Dorsolateral prefrontal cortex (tissue), 120 donors: ENCODE measurements at regions of chr7 and their contacts with region 1.

Region 1: DNA sequence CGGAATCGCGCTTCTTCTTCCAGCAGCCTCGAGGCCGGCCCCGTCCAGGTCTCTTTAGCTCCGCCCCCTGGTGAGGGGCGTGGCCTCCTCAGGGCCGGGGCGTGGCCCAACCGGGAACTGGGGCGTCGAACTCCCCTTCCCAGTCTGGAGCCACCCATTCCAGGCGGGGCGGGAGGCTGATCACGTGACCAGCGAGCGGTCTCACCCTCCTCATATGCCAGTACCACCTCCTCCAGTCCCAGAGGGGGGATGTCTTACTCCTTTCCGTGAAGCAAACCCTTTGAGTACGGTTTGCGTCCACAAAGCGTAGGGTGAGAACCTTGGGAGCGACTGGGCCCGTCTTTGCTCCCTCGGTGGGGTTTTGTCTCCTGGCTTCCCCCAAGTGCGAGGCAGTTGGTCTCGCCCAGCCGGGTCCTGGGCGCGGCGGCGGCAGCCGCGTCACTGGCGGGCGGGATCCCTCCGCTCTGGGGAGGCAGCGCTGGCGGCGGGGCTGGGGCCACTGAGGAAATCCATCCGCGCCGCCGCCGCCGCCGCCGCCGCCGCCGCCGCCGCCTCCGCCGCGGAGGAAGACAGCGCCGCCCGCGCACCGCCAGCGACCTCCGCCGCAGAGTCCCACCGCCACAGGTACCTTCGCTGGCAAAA is at the start of gene GNB2:
- DNase-seq: peak; percentile 98 to 100 (median 99)
- H3K4me3 ChIP-seq: peak within 1 kb of the TSS; percentile 67 to 98 (median 89)
- H3K27ac ChIP-seq: peak within 1 kb of the TSS; percentile 85 to 99 (median 97)
- H3K27me3 ChIP-seq: no peaks in the 10 kb centered on the region
- CTCF ChIP-seq: peak in 16 of 56 donors; percentile 3 to 38 (median 19)
- total RNA-seq, gene GNB2: 119 to 205 (median 150) TPM

Region 2: DNA sequence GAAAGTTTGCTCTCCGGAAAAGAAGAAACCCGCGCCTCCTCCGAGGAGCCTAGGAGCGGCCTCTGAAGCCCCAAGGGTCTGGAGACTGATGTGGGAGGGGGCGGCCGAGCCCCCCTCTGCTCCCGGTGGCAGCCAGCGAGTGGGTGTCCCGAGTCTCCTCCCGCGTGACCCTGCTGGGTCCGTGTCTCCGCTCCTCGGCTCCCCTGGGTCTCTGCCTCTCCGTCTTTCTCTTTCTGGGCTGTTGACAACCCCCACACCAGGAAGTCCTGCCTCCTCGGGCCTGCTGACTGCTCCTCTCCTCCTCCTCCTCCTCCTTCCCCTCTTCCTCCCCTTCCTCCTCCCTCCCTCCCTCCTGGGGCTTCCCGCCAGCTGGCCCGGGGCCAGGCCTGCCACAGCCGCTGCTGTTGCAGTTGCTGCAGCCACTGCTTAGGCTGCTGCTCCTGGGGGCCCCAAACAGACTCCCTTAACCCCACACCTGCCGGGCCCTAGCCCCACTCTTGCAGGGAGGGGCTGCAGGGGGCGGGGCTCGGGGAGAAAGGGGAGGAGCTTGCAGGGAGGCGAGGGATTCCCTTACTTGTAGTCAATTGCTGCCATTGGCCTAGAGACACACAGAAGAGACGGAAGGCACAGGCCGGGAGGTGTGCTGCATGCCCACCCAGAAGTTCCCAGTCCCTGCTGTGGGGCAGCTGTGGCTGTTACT is 194.3 kb before region 1 on chr7 and contains the start of gene TSC22D4:
- intact Hi-C with region 1: loop called in 1 of 2 experiments (anchors 5 kb)
- DNase-seq: peak; percentile 85 to 97 (median 96)
- H3K4me3 ChIP-seq: peak within 1 kb of the TSS; percentile 74 to 100 (median 95)
- H3K27ac ChIP-seq: peak within 1 kb of the TSS; percentile 55 to 98 (median 94)
- H3K27me3 ChIP-seq: no peaks in the 10 kb centered on the region
- CTCF ChIP-seq: peak in 25 of 56 donors; percentile 3 to 49 (median 24)
- total RNA-seq, gene TSC22D4: 142 to 595 (median 270) TPM

Region 3: GRCh38 chr7:100586266-100587025 is 87.0 kb before region 1 on chr7 and contains the start of gene FBXO24:
- intact Hi-C with region 1: loop called (anchors 1 to 2 kb)
- DNase-seq: peak; percentile 99 to 100 (median 100)
- H3K4me3 ChIP-seq: peak within 1 kb of the TSS; percentile 74 to 100 (median 99)
- H3K27ac ChIP-seq: peak within 1 kb of the TSS; percentile 61 to 99 (median 95)
- H3K27me3 ChIP-seq: no peaks in the 10 kb centered on the region
- CTCF ChIP-seq: peak in 5 of 56 donors; percentile 5 to 51 (median 13)
- total RNA-seq, gene FBXO24: 0.23 to 3.2 (median 1.1) TPM in 113 of 120 experiments, not detected in the others

Region 4: GRCh38 chr7:100611974-100612729 is 61.3 kb before region 1 on chr7 and contains the start of gene MOSPD3:
- intact Hi-C with region 1: loop called (anchors 5 kb)
- DNase-seq: peak; percentile 96 to 100 (median 99)
- H3K4me3 ChIP-seq: peak within 1 kb of the TSS; percentile 64 to 96 (median 86)
- H3K27ac ChIP-seq: peak within 1 kb of the TSS in 58 of 59 donors; percentile 49 to 99 (median 94)
- H3K27me3 ChIP-seq: no peaks in the 10 kb centered on the region
- CTCF ChIP-seq: peak in 21 of 56 donors; percentile 2 to 62 (median 22)
- total RNA-seq, gene MOSPD3: 11.7 to 26.4 (median 18.7) TPM

Region 5: GRCh38 chr7:100726996-100727761 is 53.8 kb after region 1 on chr7:
- intact Hi-C with region 1: no loop called
- DNase-seq: no peak
- H3K4me3 ChIP-seq: no peak overlapping the region
- H3K27ac ChIP-seq: no peak overlapping the region
- H3K27me3 ChIP-seq: peaks cover 0 to 11% (median 0%) of the 10 kb centered on the region in 45 donors
- CTCF ChIP-seq: no peak